H1 (cell line): ENCODE measurements at regions of chr2 and their contacts with region 1.

Region 1: GRCh38 chr2:68594674-68595492 is 48.5 kb upstream of the PROKR1 start:
- DNase-seq: peak; percentile 13 to 71
- H3K4me3 ChIP-seq: no peak overlapping the region
- H3K27ac ChIP-seq: no peak overlapping the region
- H3K4me1 ChIP-seq: no peaks in the 10 kb centered on the region
- H3K27me3 ChIP-seq: no peaks in the 10 kb centered on the region
- CTCF ChIP-seq: peak; percentile 43 to 74 (median 67)
- EP300 ChIP-seq: no peak
- POLR2A ChIP-seq: no peak
- RAD21 ChIP-seq: peak; percentile 36 to 49; a peak in 3 of 4 replicates

Region 2: GRCh38 chr2:68577183-68577582 is 17.7 kb before region 1 on chr2:
- CTCF ChIA-PET with region 1: interaction called, 20 read pairs
- POLR2A ChIA-PET with region 1: no interaction called
- DNase-seq: no peak
- H3K4me3 ChIP-seq: no peak overlapping the region
- H3K27ac ChIP-seq: no peak overlapping the region
- H3K4me1 ChIP-seq: no peaks in the 10 kb centered on the region
- H3K27me3 ChIP-seq: no peaks in the 10 kb centered on the region
- CTCF ChIP-seq: no peak
- EP300 ChIP-seq: no peak
- POLR2A ChIP-seq: no peak
- RAD21 ChIP-seq: no peak

Region 3: GRCh38 chr2:68605939-68606338 is 11.1 kb after region 1 on chr2:
- CTCF ChIA-PET with region 1: interaction called, 39 read pairs
- POLR2A ChIA-PET with region 1: no interaction called
- DNase-seq: no peak
- H3K4me3 ChIP-seq: no peak overlapping the region
- H3K27ac ChIP-seq: no peak overlapping the region
- H3K4me1 ChIP-seq: no peaks in the 10 kb centered on the region
- H3K27me3 ChIP-seq: no peaks in the 10 kb centered on the region
- CTCF ChIP-seq: no peak
- EP300 ChIP-seq: no peak
- POLR2A ChIP-seq: no peak
- RAD21 ChIP-seq: no peak

Region 4: GRCh38 chr2:68643011-68643873 is 48.4 kb after region 1 on chr2 and contains the start of gene PROKR1:
- CTCF ChIA-PET with region 1: interaction called, 10 read pairs
- POLR2A ChIA-PET with region 1: interaction called, 6 read pairs
- DNase-seq: peak in 1 of 2 experiments; percentile 83
- H3K4me3 ChIP-seq: peak within 1 kb of the TSS; percentile 53 to 91 (median 73)
- H3K27ac ChIP-seq: no peak within 1 kb of the TSS
- H3K4me1 ChIP-seq: peaks cover 0 to 5% (median 2%) of the 10 kb centered on the region in 4 experiments; a peak in 5 of 7 replicates
- H3K27me3 ChIP-seq: peaks cover 2 to 29% (median 16%) of the 10 kb centered on the region in 4 experiments
- CTCF ChIP-seq: no peak
- EP300 ChIP-seq: no peak
- POLR2A ChIP-seq: 0 out of 3 replicates have a peak, but pooled peaks of 1 of the 2 experiments have one; percentile 14
- RAD21 ChIP-seq: no peak; a peak in 1 of 4 replicates
- total RNA-seq, gene PROKR1: 3.9 and 4.0 TPM in 2 replicates

Region 5: DNA sequence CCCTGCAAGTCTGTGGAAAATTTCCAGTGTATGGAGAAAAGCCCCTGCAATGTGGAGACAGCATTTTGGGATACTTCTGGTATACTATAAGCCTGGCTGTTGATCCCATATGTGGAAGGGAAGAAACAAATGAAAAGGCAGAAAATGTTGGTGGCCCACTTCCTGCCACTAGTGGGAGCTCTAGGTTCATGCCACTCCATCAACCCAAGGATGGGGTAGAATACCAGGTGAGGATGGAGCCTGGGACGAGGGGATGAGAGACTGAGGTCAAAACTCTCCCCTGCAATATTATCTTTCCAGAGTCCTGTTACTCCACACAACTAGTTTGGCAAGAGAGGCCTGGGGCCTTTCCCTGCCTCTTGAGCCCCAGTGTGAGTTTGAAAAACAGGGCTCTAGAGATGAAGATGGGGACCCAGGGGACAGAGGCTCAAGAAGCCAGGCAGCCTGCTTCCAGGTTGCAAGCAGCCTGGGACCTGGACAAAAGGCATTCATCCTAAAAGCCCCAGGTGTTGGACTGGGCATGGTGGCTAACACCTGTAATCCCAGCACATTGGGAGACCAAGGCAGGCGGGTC is 244.5 kb after region 1 on chr2:
- CTCF ChIA-PET with region 1: no interaction called
- POLR2A ChIA-PET with region 1: no interaction called
- DNase-seq: peak in 1 of 2 experiments; percentile 65
- H3K4me3 ChIP-seq: no peak overlapping the region
- H3K27ac ChIP-seq: no peak overlapping the region
- H3K4me1 ChIP-seq: no peaks in the 10 kb centered on the region
- H3K27me3 ChIP-seq: no peaks in the 10 kb centered on the region
- CTCF ChIP-seq: peak; percentile 52 to 79 (median 67)
- EP300 ChIP-seq: no peak
- POLR2A ChIP-seq: no peak
- RAD21 ChIP-seq: peak; percentile 81 to 87